Posterior cingulate gyrus (tissue), 11 donors: ENCODE measurements at regions of chr2 and their contacts with region 1.

Region 1: DNA sequence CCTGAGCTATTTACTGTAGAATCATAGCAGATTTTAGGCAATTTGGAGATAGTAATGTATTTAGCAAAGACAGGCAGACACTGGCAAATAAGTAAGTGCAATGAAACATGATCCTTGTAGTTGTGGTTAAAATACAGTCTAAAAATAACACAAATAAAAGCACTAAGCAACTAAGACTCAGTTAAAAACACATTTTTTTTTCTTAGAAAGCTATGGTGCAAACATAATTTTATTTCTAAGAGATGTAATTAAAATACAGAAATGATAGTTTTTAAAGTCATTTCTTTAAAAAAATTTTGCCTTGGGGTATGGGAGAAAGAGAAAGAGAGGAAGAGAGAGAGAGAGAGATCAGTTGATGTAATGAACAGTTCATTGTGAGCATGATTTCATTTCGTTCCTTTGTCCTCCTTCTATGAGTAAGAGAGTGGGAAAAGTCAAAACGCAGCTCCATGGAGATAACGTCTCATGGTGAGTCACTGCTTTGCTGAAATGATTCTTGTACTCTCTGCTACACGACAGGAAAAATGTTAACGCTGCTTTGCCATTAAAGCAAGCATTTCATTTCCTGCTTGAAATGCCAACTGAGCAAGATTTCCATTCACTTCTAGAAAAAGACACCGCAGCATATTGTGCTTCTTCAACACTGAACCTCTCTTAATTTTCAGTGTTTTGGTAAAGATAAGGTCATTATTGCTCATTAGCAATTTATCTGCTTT is 61.3 kb upstream of the PGAP1 start:
- DNase-seq: no peak

Region 2: GRCh38 chr2:196926562-196927375 is 61.0 kb before region 1 on chr2 and contains the start of gene PGAP1:
- intact Hi-C with region 1: loop called (anchors 5 kb)
- DNase-seq: peak; percentile 81 to 97 (median 86)